Right cardiac atrium (tissue), 5 donors: ENCODE measurements at regions of chr7 and their contacts with region 1.

Region 1: DNA sequence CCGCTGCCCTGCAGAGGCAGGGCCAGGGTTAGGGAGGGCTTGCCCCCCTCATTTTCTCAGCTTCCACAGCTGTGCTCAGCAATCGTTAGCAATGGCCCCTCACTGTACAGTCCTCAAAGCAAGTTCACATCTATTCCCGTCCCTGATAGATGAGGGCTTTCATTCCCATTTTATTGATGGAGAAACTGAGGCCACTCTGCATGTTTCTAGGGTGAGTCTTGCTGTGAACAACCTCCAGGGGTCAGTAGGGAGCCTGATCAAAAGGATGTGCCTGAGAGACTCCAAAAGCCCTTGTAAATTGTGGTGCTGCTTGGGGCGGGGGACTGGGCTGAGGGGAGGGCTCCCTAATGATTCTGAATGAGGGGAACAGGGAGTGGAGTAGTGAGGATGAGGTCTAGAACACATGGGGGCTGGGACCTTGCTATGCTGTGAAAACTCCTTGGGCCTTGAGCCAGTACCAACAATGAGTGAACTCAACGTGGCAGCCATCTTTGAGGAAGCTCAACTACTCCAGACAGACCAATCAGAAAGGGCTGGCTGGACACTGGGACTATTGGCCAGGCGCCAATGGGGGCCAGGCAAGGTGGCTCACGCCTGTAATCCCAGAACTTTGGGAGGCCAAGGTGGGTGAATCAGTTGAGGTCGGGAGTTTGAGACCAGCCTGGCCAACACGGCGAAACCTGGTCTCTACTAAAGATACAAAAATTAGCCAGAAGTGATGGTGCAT is 6.7 kb upstream of the GRIFIN start:
- DNase-seq: peak in 2 of 3 donors; percentile 32 to 45
- ATAC-seq: no peak
- H3K4me3 ChIP-seq: no peak overlapping the region
- H3K27ac ChIP-seq: no peak overlapping the region
- H3K4me1 ChIP-seq: peaks cover 8% of the 10 kb centered on the region
- H3K27me3 ChIP-seq: no peaks in the 10 kb centered on the region

Region 2: DNA sequence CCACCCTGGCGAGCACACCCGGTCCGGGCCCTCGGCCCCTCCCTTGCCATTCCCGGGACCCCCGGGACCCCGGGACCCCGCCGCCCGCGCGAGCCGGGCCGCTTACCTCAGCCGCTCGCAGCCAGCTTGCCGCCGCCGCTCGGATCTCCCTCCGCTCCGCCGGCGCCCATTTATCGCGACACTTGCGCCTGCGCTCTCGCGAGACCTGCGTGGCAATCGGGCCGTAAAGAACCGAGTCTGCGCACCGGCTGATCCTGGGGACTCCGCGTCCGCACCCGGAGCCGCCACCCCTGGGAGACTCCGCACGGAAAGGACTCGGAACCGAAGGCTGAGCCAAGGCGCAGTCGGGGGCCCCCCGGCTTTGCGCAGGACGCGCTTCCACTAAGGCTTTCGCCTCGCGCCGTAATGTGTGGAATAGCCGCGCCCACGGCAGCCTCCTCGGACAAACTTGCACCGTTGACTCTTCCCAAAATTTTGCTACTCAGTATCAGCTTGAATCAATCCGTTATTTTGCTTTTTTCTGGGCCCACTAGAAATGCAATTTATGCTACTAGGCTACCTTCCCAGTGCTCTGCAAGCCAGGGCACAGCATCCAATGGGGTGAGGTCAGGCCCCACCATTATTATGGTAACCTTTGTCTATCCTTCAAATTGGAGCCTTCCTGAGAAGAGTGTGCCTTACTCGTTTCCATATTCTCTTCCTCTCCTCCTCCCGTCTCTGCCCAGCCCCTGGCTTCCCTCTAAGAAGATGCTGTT is 249.9 kb before region 1 on chr7 and contains the start of gene MAD1L1:
- intact Hi-C with region 1: no loop called
- DNase-seq: peak; percentile 91 to 97 (median 96)
- ATAC-seq: peak; percentile 91 to 92
- H3K4me3 ChIP-seq: peak within 1 kb of the TSS; percentile 85
- H3K27ac ChIP-seq: peak within 1 kb of the TSS; percentile 25
- H3K4me1 ChIP-seq: peaks cover 8% of the 10 kb centered on the region
- H3K27me3 ChIP-seq: no peaks in the 10 kb centered on the region
- total RNA-seq, gene MAD1L1: 15.3 to 36.7 (median 29.7) TPM

Region 3: DNA sequence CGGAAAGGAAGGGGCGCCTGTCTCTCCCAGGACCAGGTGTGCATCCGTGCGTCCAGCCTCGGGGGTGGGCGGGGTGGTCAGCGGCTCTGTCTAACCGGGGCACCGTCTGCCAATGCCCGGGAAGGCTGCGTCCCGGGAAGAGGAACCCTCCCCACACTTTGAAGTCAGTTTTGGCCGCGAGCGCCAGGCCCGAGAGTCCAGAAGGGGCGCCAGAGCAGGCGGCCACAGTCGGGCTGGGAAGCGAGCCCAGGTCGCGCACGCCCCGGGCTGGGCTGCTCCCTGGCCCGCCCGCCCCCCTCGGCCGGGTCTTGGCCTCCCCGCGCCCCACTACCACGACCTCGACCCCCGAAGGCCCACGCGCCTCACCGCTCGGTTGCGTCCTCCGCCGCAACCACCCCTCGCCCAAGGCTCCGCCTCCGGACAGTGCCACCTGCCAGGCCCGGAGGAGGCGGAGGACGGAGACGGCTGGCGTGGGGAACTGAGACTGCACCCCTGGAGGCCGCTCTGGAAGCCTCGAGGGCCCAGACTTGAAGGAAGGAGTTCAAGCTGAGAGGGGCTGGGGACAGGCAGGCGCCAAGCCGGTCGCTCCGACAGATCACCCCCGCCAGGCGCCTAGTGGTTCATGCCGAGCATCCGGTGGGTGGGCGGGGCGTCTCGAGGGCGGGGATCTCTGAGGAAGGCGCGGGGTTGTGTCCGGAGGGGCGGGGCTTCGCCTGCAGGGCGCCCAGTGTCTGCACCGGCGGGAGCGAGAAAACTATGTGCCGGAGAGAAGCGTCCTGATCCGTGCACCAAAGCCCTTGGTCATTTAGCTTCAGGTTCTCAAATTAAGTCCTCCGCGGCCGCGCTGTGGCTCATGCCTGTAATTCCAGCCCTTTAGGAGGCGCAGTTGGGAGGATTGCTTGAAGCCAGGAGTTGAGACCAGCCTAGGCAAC is 72.5 kb after region 1 on chr7 and contains the start of gene BRAT1:
- intact Hi-C with region 1: loop called in 1 of 4 experiments (anchors 10 kb)
- DNase-seq: peak; percentile 97 to 99 (median 99)
- ATAC-seq: peak; percentile 94 to 95
- H3K4me3 ChIP-seq: peak within 1 kb of the TSS; percentile 65
- H3K27ac ChIP-seq: peak within 1 kb of the TSS; percentile 96
- H3K4me1 ChIP-seq: peaks cover 4% of the 10 kb centered on the region
- H3K27me3 ChIP-seq: no peaks in the 10 kb centered on the region
- total RNA-seq, gene BRAT1: 15.4 to 19.0 (median 16.1) TPM